ENCODE measurements at regions of chr16 and their contacts with region 1.

Region 1: GRCh38 chr16:35795361-35796029 is 2336.1 kb downstream of the TP53TG3F start:
- DNase-seq: peak in 1 of 2 donors; percentile 15
- ATAC-seq: peak in 4 of 8 donors; percentile 12 to 61 (median 34)
- H3K4me3 ChIP-seq: peak overlapping the region in 2 of 10 donors; percentile 3 to 32
- H3K27ac ChIP-seq: no peak overlapping the region
- H3K4me1 ChIP-seq: peaks cover 0 to 5% (median 0%) of the 10 kb centered on the region in 9 donors
- H3K27me3 ChIP-seq: peaks cover 0 to 3% (median 0%) of the 10 kb centered on the region in 7 donors
- CTCF ChIP-seq: no peak

Region 2: DNA sequence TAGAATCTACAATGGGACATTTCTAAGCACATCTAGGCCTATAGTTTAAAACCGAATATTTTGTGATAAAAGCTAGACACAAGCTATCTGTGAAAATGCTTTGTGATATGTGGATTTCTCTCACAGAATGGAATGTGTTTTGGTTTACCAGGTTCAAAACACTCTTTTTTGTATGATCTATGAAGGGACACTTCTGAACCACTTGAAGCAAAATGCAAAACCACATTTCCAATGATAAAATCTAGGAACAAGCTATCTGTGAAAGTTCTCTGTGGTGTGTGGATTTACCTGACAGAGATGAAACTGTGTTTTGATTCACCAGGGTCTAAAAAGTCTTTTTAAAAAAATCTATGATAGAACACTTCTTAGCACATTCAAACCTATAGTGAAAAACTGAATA is 143.7 kb before region 1 on chr16:
- intact Hi-C with region 1: no loop called
- DNase-seq: no peak
- ATAC-seq: no peak
- H3K4me3 ChIP-seq: no peak overlapping the region
- H3K27ac ChIP-seq: no peak overlapping the region
- H3K4me1 ChIP-seq: no peaks in the 10 kb centered on the region
- H3K27me3 ChIP-seq: no peaks in the 10 kb centered on the region
- CTCF ChIP-seq: no peak

Region 3: DNA sequence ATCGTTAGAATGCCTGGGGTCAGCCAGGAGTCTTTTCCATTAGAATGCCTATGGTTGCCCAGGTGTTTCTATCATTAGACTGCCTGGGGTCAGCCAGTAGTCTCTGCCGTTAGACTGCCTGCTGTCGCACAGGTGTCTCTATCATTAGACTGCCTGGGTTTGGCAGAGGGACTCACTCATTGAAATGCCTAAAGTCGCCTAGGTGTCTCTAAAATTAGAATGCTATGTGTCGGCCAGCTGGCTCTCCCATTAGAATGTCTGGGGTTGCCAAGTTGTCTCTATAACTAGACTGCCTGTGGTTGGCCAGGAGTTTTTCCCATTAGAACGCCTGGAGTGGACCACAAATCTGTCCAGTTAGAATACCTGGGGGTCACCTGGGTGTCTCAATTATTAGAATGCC is 69.5 kb before region 1 on chr16:
- intact Hi-C with region 1: loop called in 1 of 10 experiments (anchors 10 kb)
- DNase-seq: peak in 1 of 2 donors; percentile 17
- ATAC-seq: peak in 7 of 8 donors; percentile 70 to 87 (median 80)
- H3K4me3 ChIP-seq: no peak overlapping the region
- H3K27ac ChIP-seq: peak overlapping the region in 2 of 10 donors; percentile 26 to 44
- H3K4me1 ChIP-seq: peaks cover 0 to 40% (median 9%) of the 10 kb centered on the region in 9 donors
- H3K27me3 ChIP-seq: no peaks in the 10 kb centered on the region
- CTCF ChIP-seq: no peak

Region 4: GRCh38 chr16:35744716-35745115 is 50.8 kb before region 1 on chr16:
- intact Hi-C with region 1: loop called in 1 of 10 experiments (anchors 10 kb)
- DNase-seq: no peak
- ATAC-seq: no peak
- H3K4me3 ChIP-seq: no peak overlapping the region
- H3K27ac ChIP-seq: no peak overlapping the region
- H3K4me1 ChIP-seq: no peaks in the 10 kb centered on the region
- H3K27me3 ChIP-seq: no peaks in the 10 kb centered on the region
- CTCF ChIP-seq: no peak